Dorsolateral prefrontal cortex (tissue), 120 donors: ENCODE measurements at regions of chr1 and their contacts with region 1.

Region 1: DNA sequence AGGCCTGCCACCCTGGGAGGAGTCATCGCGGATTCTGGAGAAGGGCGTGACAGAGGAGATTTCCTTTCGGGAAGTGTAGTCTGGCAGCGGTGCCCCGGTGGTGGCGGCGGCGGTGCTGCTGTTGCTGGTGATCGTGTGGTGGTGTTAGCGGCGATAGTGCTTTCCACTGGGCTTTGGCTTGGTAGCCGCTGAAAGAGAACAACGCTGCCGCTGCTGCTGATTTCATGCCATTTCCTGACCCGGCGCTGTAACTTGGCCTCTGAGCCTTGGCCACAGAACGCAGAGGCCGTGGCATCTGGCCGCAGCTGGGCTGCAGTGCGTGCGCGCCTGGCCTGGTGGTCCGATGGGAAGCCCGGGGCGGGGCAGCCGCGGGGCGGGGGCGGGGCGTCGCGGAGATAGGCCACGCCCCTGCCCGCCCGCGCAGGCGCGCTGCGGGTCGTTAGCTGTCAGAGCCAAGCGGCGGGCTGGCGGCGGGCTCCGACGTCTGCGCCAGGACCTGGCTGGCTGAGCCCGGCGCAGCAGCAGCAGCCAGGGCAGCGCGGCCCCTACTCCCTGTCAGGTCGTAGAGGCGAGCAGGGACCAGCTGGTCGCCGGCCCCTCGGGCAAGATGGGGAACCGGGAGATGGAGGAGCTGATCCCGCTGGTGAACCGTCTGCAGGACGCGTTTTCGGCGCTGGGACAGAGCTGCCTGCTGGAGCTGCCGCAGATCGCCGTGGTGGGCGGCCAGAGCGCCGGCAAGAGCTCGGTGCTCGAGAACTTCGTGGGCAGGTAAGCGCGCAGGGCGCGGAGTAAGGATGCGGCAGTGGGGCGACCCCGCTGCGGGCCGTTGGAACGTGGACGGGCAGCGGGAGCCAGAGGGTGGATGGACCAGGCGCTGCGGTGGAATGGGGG is at the start of gene DNM3:
- DNase-seq: peak; percentile 89 to 97 (median 92)
- H3K4me3 ChIP-seq: peak within 1 kb of the TSS; percentile 65 to 100 (median 93)
- H3K27ac ChIP-seq: peak within 1 kb of the TSS; percentile 84 to 99 (median 96)
- H3K27me3 ChIP-seq: no peaks in the 10 kb centered on the region
- CTCF ChIP-seq: peak in 32 of 56 donors; percentile 5 to 57 (median 25)
- total RNA-seq, gene DNM3: 79.4 to 235 (median 160) TPM

Region 2: GRCh38 chr1:171819946-171820345 is 21.3 kb before region 1 on chr1:
- intact Hi-C with region 1: loop called in 1 of 2 experiments (anchors 2 kb)
- DNase-seq: peak in 7 of 10 donors; percentile 28 to 61 (median 50)
- H3K4me3 ChIP-seq: peak overlapping the region in 5 of 59 donors; percentile 0 to 39 (median 18)
- H3K27ac ChIP-seq: peak overlapping the region in 18 of 59 donors; percentile 4 to 64 (median 28)
- H3K27me3 ChIP-seq: no peaks in the 10 kb centered on the region
- CTCF ChIP-seq: no peak

Region 3: GRCh38 chr1:171898941-171899340 is 57.6 kb after region 1 on chr1:
- intact Hi-C with region 1: loop called (anchors 1 to 5 kb)
- DNase-seq: peak; percentile 38 to 92 (median 86)
- H3K4me3 ChIP-seq: peak overlapping the region in 58 of 59 donors; percentile 1 to 69 (median 42)
- H3K27ac ChIP-seq: peak overlapping the region; percentile 62 to 100 (median 95)
- H3K27me3 ChIP-seq: no peaks in the 10 kb centered on the region
- CTCF ChIP-seq: peak in 23 of 56 donors; percentile 9 to 46 (median 18)

Region 4: GRCh38 chr1:171913385-171913784 is 72.1 kb after region 1 on chr1:
- intact Hi-C with region 1: loop called in 1 of 2 experiments (anchors 5 kb)
- DNase-seq: no peak
- H3K4me3 ChIP-seq: peak overlapping the region in 10 of 59 donors; percentile 0 to 41 (median 10)
- H3K27ac ChIP-seq: peak overlapping the region in 58 of 59 donors; percentile 2 to 89 (median 79)
- H3K27me3 ChIP-seq: no peaks in the 10 kb centered on the region
- CTCF ChIP-seq: peak in 1 of 56 donors; percentile 9

Region 5: DNA sequence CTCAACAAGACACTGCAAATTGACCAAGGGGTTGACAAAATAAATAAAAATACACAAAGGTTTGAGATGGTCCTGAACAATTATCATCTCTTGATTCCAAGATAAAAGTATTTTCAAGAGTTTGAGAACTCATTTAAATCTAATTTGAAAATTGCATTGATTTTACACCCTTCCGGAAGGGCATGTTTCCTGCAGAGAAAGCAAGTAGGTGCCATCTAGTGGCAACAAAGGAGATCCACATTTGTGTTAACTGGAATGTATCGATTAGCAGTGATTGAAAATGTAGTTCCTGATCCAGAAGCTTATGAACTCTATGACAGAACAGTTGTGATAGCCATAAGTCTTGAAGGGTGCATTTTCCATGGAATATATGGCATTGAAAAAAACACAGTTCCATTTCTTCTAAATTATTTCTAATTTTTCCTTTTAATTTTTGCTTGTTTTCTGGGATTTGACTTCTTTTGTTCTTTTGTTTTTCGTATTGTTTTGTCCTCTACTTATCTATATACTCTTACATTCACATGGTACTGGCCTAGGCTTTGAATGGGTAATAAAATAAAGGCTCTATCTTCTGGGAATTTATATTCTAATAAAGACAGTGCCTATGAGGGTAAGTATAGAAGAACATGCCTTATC is 143.7 kb after region 1 on chr1:
- intact Hi-C with region 1: loop called (anchors 2 kb)
- DNase-seq: no peak
- H3K4me3 ChIP-seq: peak overlapping the region in 1 of 59 donors; percentile 13
- H3K27ac ChIP-seq: peak overlapping the region in 46 of 59 donors; percentile 1 to 77 (median 60)
- H3K27me3 ChIP-seq: no peaks in the 10 kb centered on the region
- CTCF ChIP-seq: peak; percentile 73 to 97 (median 89)

Region 6: DNA sequence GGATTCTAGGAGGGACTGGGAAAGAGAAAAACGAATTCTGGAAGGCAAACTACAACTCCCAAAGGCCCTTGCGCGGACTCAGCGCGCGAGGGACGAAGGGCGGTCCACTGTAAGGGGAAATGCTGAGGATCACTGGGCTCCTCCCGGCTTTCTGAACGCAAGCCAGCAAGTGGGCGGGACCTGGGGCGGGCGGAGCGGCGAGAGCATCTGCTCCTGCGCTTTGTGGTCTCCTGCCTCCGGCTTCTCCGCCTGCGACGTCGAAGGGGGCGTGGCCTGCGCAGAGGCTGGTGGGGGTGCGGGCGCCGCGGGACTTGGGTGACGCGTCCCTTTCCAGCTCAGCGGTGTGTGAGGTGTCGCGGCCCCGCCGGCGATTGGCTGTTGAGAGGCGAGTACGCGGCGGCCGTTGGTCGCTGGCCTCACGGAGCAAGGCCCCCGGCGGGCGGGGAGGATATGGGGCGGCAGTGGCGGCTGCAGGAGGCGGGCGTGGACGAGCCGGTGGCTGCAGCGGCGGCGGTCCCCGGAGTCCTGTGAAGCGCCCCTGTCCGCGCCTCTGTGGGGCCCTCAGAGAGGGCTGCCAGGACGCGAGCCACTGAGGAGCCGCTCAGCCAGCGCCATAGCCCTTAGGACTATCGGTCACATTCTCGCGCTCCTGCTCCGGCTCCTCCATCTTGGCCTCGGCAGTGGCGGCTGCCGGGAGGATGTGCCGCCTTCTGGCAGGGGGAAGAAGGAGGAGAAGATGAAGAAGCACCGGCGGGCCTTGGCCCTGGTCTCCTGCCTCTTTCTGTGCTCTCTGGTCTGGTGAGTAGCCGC is 691.6 kb after region 1 on chr1 and contains the start of gene SUCO:
- intact Hi-C with region 1: loop called in 1 of 2 experiments (anchors 5 kb)
- DNase-seq: peak; percentile 99 to 100 (median 99)
- H3K4me3 ChIP-seq: peak within 1 kb of the TSS; percentile 67 to 99 (median 93)
- H3K27ac ChIP-seq: peak within 1 kb of the TSS; percentile 93 to 100 (median 98)
- H3K27me3 ChIP-seq: no peaks in the 10 kb centered on the region
- CTCF ChIP-seq: peak in 32 of 56 donors; percentile 0 to 52 (median 22)
- total RNA-seq, gene SUCO: 24.2 to 46.6 (median 34.6) TPM